ENCODE measurements at regions of chr12 and their contacts with region 1.

Region 1: DNA sequence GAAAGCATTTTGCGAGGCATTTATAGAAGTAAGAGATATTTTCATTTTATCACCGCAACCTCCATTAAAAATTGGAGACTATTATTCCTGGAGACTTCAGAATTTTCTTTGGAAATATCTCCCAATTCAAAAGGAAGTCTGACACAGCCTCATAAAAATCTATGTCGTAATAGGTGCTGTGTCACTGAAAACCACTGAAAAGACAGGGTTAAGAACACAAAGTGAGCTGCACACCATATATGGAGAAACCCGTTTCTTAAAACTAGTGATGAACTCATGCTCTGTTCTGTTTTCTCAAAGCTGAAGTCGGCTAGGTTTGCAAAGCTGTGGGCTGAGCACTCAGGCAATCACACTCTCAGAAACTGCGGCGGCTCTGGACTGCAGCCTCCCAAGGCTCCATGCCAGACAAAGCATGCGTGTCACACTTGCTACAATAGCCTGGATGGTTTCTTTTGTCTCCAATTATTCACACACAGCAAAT is at the start of gene GLIPR1:
- DNase-seq: peak; percentile 77
- H3K4me3 Mint-ChIP-seq: peak within 1 kb of the TSS; percentile 87
- H3K27ac Mint-ChIP-seq: peak within 1 kb of the TSS; percentile 82
- H3K4me1 Mint-ChIP-seq: peaks cover 78% of the 10 kb centered on the region
- H3K27me3 Mint-ChIP-seq: no peaks in the 10 kb centered on the region
- total RNA-seq, gene GLIPR1: 1.3 to 1.5 TPM

Region 2: GRCh38 chr12:75341832-75342231 is 138.7 kb before region 1 on chr12:
- CTCF ChIA-PET with region 1: interaction called, 3 read pairs
- intact Hi-C with region 1: loop called (anchors 1 kb)
- DNase-seq: no peak
- H3K4me3 Mint-ChIP-seq: no peak overlapping the region
- H3K27ac Mint-ChIP-seq: no peak overlapping the region
- H3K4me1 Mint-ChIP-seq: peaks cover 10% of the 10 kb centered on the region
- H3K27me3 Mint-ChIP-seq: peaks cover 14% of the 10 kb centered on the region

Region 3: GRCh38 chr12:75404231-75404630 is 76.3 kb before region 1 on chr12:
- CTCF ChIA-PET with region 1: no interaction called
- intact Hi-C with region 1: no loop called
- DNase-seq: no peak
- H3K4me3 Mint-ChIP-seq: no peak overlapping the region
- H3K27ac Mint-ChIP-seq: no peak overlapping the region
- H3K4me1 Mint-ChIP-seq: no peaks in the 10 kb centered on the region
- H3K27me3 Mint-ChIP-seq: no peaks in the 10 kb centered on the region

Region 4: DNA sequence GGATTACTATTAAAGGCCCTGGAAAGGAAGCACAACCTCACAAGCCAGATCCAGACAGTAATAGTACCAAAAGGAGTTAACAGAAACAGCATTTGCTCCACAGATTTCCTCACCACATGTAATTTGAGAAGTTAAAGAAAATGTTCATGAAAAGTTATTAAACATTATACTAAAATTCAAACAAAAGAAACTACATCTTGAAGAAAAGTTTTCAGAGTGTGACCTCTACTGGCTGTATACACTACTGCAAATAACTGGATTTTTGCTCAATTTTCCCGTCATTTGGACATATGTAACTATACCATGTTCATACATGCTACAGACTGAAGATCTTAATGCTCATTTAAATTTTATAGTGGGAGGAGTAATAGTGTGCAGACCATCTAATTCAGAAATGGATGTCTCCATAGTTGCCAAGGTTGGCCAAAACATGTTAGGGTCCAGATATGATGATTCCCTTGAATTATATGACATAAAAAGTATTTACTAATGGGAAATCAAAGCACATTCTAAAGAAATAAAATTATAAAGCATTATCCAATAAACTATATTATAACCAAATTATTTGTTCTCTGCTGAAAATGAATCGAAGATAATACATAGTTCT is 25.3 kb after region 1 on chr12:
- CTCF ChIA-PET with region 1: interaction called, 27 read pairs
- intact Hi-C with region 1: loop called (anchors 1 kb)
- DNase-seq: no peak
- H3K4me3 Mint-ChIP-seq: no peak overlapping the region
- H3K27ac Mint-ChIP-seq: peak overlapping the region; percentile 31
- H3K4me1 Mint-ChIP-seq: peaks cover 29% of the 10 kb centered on the region
- H3K27me3 Mint-ChIP-seq: no peaks in the 10 kb centered on the region

Region 5: GRCh38 chr12:75641031-75641780 is 160.7 kb after region 1 on chr12:
- CTCF ChIA-PET with region 1: no interaction called
- intact Hi-C with region 1: loop called (anchors 5 kb)
- DNase-seq: peak; percentile 26
- H3K4me3 Mint-ChIP-seq: no peak overlapping the region
- H3K27ac Mint-ChIP-seq: no peak overlapping the region
- H3K4me1 Mint-ChIP-seq: peaks cover 21% of the 10 kb centered on the region
- H3K27me3 Mint-ChIP-seq: peaks cover 12% of the 10 kb centered on the region

Region 6: DNA sequence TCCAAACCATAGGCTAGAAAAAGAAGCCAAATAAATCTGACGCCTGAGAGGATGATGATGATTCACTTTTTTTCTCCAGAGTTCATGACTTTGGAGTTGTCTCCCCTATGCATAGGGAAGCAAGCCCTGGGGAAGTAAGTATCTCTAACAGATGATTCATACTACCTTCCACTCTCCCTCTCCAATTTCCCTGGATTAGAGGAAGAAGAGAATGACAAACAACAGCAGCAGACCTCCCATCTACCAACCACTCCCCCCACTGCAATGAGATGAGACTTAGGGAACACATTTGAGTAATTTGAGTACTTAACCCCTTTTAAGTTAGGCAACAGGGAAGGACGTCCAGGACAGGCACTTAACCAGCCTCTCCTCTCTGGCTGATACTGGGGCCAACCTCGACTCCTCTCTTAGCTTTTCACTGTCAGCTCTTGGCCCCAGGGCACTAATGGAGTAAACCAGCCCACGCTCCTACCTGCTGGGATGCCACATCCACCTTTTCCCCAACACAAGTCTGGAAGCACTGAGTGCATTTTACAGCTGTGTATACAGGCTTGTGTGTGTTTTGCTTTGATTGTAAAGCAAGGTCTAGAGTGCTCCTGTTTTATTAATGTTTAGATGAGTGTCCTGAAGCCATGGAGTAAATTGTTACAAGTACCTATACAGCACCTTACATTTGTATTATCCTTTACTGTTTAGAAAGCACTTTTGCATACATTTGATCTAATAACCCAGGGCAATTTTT is 370.4 kb after region 1 on chr12:
- CTCF ChIA-PET with region 1: no interaction called
- intact Hi-C with region 1: no loop called
- DNase-seq: no peak
- H3K4me3 Mint-ChIP-seq: no peak overlapping the region
- H3K27ac Mint-ChIP-seq: no peak overlapping the region
- H3K4me1 Mint-ChIP-seq: no peaks in the 10 kb centered on the region
- H3K27me3 Mint-ChIP-seq: peaks cover 20% of the 10 kb centered on the region

Region 7: GRCh38 chr12:76020731-76021672 is 540.5 kb after region 1 on chr12:
- CTCF ChIA-PET with region 1: interaction called, 7 read pairs
- intact Hi-C with region 1: loop called (anchors 1 kb)
- DNase-seq: peak; percentile 91
- H3K4me3 Mint-ChIP-seq: peak overlapping the region; percentile 40
- H3K27ac Mint-ChIP-seq: peak overlapping the region; percentile 95
- H3K4me1 Mint-ChIP-seq: peaks cover 45% of the 10 kb centered on the region
- H3K27me3 Mint-ChIP-seq: no peaks in the 10 kb centered on the region

Region 8: DNA sequence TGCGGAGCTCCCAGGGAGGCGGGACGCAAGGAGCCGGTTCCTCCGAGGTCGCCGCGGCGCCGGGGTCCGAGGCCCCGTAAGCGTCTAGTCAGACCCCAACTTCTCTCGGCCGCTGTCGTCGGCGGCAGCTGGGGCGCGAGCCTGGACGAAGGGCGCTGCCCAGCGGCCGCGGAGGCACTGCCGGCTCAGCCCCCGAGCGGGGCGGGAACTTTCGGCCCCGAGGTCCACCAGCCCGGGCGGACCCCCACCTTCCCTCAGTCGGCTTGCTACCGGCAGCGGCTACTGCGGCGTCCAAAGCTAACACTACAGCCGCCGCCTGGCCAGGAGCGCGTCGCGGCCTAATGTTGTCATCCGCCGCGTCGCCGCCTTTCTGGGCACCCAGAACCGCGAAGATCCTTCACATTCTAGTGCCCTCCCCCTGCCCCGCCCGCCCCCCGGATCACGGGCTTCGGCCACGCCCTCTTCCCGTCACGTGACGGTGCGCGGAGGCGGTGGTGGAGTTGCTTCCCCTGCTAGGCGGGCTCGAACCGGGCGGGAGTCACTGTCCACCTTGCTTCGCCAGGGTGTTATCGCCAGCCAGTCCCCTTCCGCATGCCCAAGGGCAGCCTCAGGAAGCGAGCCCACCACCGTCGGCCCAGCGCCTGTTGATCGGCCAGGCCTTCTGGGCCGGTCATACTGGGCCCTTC is 1079.0 kb after region 1 on chr12 and contains the start of gene OSBPL8:
- CTCF ChIA-PET with region 1: no interaction called
- intact Hi-C with region 1: loop called (anchors 1 kb)
- DNase-seq: peak; percentile 96
- H3K4me3 Mint-ChIP-seq: peak within 1 kb of the TSS; percentile 92
- H3K27ac Mint-ChIP-seq: peak within 1 kb of the TSS; percentile 96
- H3K4me1 Mint-ChIP-seq: peaks cover 34% of the 10 kb centered on the region
- H3K27me3 Mint-ChIP-seq: no peaks in the 10 kb centered on the region
- total RNA-seq, gene OSBPL8: 56.8 to 63.7 TPM

Measured in activated naive CD4-positive, alpha-beta T cell treated with anti-CD3 and anti-CD28 coated beads for 36 hours (primary cell).